Gastrocnemius medialis (tissue), 4 donors: ENCODE measurements at regions of chr1 and their contacts with region 1.

Region 1: GRCh38 chr1:1391225-1391624 is 7.9 kb downstream of the CCNL2 start:
- DNase-seq: no peak
- ATAC-seq: no peak
- H3K4me3 ChIP-seq: no peak overlapping the region
- H3K27ac ChIP-seq: no peak overlapping the region
- H3K4me1 ChIP-seq: peaks cover 9 to 22% of the 10 kb centered on the region in 2 donors
- H3K27me3 ChIP-seq: no peaks in the 10 kb centered on the region
- CTCF ChIP-seq: no peak
- POLR2A ChIP-seq: no peak

Region 2: GRCh38 chr1:844472-845026 is 546.7 kb before region 1 on chr1:
- in situ Hi-C with region 1: no loop called
- intact Hi-C with region 1: no loop called
- DNase-seq: no peak
- ATAC-seq: no peak
- H3K4me3 ChIP-seq: no peak overlapping the region
- H3K27ac ChIP-seq: no peak overlapping the region
- H3K4me1 ChIP-seq: no peaks in the 10 kb centered on the region
- H3K27me3 ChIP-seq: no peaks in the 10 kb centered on the region
- CTCF ChIP-seq: no peak
- POLR2A ChIP-seq: no peak

Region 3: DNA sequence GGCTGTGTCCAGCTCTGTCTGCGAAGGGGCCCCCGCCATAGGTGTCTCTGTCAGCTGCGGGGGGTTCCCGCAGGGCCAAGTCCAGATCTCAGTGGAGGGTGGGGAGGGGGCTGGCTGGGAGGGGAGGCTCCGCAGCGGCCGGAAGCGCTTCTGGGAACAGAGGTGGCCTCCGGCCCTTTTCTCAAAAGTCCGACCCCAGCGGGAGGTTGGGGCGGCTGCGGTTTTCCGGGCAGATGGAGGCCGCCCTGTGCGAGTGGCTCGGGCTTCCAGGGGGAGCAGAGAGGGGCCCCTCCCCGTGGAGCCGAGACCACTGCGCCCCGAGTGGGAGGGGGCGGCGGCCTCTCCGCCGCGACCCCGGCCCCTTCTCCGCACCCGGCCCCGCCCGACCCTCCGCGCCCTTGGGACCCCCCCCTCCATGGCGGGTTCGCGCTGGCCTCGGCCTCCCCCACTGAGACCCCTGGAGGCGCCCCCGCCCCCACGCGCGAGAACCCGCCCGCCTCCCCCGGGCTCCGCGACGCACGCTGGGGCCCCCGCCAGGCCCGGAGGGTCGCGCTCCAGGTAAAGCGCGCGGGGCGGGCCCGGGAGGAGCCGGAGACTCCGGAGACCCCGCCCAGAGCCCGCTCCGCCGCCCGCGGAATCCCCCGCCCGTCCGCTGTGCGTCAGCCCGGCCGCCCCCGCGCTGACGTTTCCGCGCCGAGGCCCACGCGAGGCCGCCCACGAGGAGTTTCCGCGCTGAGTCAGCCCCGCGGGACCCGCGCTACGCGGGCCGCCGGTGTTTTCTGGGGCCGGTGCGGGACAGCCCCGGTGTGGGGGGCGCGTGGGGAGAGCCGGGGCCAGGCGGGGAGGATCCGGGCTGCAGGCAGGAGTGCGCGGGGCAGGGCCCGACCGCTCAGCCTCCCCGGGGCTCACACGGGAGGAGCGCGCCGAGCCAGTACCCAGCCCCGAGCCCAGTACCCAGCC is 190.1 kb before region 1 on chr1:
- in situ Hi-C with region 1: no loop called
- intact Hi-C with region 1: no loop called
- DNase-seq: no peak
- ATAC-seq: no peak
- H3K4me3 ChIP-seq: peak overlapping the region in 3 of 4 donors; percentile 31 to 50 (median 35)
- H3K27ac ChIP-seq: peak overlapping the region in 1 of 4 donors; percentile 21
- H3K4me1 ChIP-seq: peaks cover 0 to 5% of the 10 kb centered on the region in 2 donors
- H3K27me3 ChIP-seq: peaks cover 13 to 15% (median 15%) of the 10 kb centered on the region in 3 donors
- CTCF ChIP-seq: no peak
- POLR2A ChIP-seq: peak in 1 of 2 donors; percentile 9

Region 4: GRCh38 chr1:1847061-1847850 is 456.0 kb after region 1 on chr1:
- in situ Hi-C with region 1: no loop called
- intact Hi-C with region 1: loop called (anchors 5 kb)
- DNase-seq: no peak
- ATAC-seq: peak; percentile 33 to 65
- H3K4me3 ChIP-seq: no peak overlapping the region
- H3K27ac ChIP-seq: peak overlapping the region; percentile 36 to 64 (median 46)
- H3K4me1 ChIP-seq: peaks cover 41 to 42% of the 10 kb centered on the region in 2 donors
- H3K27me3 ChIP-seq: no peaks in the 10 kb centered on the region
- CTCF ChIP-seq: no peak
- POLR2A ChIP-seq: no peak